Natural killer cell (primary cell): ENCODE measurements at regions of chr9 and their contacts with region 1.

Region 1: DNA sequence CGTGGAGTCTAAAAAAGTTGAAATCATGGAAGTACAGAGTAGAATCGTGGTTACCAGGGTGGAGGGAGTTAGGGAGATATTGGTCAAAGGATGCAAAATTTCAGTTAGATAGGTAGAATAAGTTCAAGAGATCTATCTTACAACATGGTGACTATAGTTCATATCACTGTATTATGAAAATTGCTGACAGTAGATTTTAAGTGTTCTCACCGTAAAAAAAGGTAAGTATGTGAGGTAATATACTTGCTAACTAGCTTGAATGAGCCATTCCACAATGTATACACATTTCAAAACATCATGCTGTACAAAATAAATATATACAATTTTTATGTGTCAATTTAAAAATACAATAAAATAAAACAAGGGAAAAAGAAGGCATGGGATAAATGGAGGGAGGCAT is 392.1 kb downstream of the CAAP1 start:
- DNase-seq: no peak
- ATAC-seq: no peak
- H3K4me3 ChIP-seq: no peak overlapping the region
- H3K4me3 Mint-ChIP-seq: no peak overlapping the region
- H3K27ac ChIP-seq: no peak overlapping the region
- H3K27ac Mint-ChIP-seq: no peak overlapping the region
- H3K4me1 ChIP-seq: no peaks in the 10 kb centered on the region
- H3K4me1 Mint-ChIP-seq: no peaks in the 10 kb centered on the region
- H3K27me3 ChIP-seq: no peaks in the 10 kb centered on the region
- H3K27me3 Mint-ChIP-seq: no peaks in the 10 kb centered on the region
- CTCF ChIP-seq: no peak

Region 2: GRCh38 chr9:26513730-26514129 is 13.3 kb after region 1 on chr9:
- intact Hi-C with region 1: loop called (anchors 2 kb)
- DNase-seq: no peak
- ATAC-seq: no peak
- H3K4me3 ChIP-seq: no peak overlapping the region
- H3K4me3 Mint-ChIP-seq: no peak overlapping the region
- H3K27ac ChIP-seq: no peak overlapping the region
- H3K27ac Mint-ChIP-seq: no peak overlapping the region
- H3K4me1 ChIP-seq: no peaks in the 10 kb centered on the region
- H3K4me1 Mint-ChIP-seq: no peaks in the 10 kb centered on the region
- H3K27me3 ChIP-seq: no peaks in the 10 kb centered on the region
- H3K27me3 Mint-ChIP-seq: no peaks in the 10 kb centered on the region
- CTCF ChIP-seq: no peak